Sigmoid colon (tissue), 7 donors: ENCODE measurements at regions of chr1 and their contacts with region 1.

Region 1: GRCh38 chr1:8423650-8424538 is 106.0 kb downstream of the SLC45A1 start:
- DNase-seq: peak; percentile 74
- H3K4me3 ChIP-seq: peak overlapping the region; percentile 75 to 99 (median 94)
- H3K27ac ChIP-seq: peak overlapping the region; percentile 96 to 100 (median 98)
- H3K4me1 ChIP-seq: peaks cover 0 to 57% (median 44%) of the 10 kb centered on the region in 4 donors
- H3K27me3 ChIP-seq: no peaks in the 10 kb centered on the region
- CTCF ChIP-seq: peak in 1 of 4 experiments; percentile 26
- EP300 ChIP-seq: no peak
- POLR2A ChIP-seq: peak; percentile 15 to 20

Region 2: GRCh38 chr1:8554956-8555534 is 131.2 kb after region 1 on chr1:
- intact Hi-C with region 1: no loop called
- DNase-seq: peak; percentile 42
- H3K4me3 ChIP-seq: no peak overlapping the region
- H3K27ac ChIP-seq: no peak overlapping the region
- H3K4me1 ChIP-seq: peaks cover 0 to 13% (median 3%) of the 10 kb centered on the region in 4 donors
- H3K27me3 ChIP-seq: no peaks in the 10 kb centered on the region
- CTCF ChIP-seq: no peak
- EP300 ChIP-seq: no peak
- POLR2A ChIP-seq: no peak

Region 3: DNA sequence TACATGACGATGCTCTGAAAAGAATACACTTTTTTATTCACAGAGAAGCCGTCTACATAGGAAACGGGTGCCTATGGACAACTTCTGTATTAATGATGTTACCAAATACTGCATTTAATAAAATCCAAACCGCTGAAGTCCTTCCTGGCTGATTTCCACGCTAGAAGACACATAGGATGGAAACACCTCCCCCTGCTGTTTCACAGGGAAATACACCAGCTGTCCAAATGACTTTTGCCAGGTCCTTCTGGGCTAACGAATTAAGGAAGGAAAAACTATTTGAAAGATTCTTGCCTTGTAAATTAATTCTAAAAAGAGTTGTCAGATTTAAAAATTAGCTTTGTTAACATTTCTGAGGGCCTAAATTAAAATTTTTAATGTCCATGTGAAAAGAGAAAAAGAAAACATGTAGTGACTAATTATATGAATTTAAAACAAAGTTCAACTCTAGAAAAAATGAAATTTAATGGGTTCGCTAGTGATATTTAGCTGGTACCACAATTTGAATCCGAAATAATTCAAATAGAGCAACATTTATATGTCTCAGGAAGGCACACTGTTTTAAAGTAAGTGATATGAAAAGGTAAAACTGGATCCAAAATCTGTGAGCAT is 247.5 kb after region 1 on chr1:
- intact Hi-C with region 1: no loop called
- DNase-seq: peak; percentile 81
- H3K4me3 ChIP-seq: no peak overlapping the region
- H3K27ac ChIP-seq: peak overlapping the region in 2 of 4 donors; percentile 46 to 51
- H3K4me1 ChIP-seq: peaks cover 0 to 65% (median 51%) of the 10 kb centered on the region in 4 donors
- H3K27me3 ChIP-seq: no peaks in the 10 kb centered on the region
- CTCF ChIP-seq: peak; percentile 44 to 87 (median 76)
- EP300 ChIP-seq: no peak
- POLR2A ChIP-seq: no peak

Region 4: DNA sequence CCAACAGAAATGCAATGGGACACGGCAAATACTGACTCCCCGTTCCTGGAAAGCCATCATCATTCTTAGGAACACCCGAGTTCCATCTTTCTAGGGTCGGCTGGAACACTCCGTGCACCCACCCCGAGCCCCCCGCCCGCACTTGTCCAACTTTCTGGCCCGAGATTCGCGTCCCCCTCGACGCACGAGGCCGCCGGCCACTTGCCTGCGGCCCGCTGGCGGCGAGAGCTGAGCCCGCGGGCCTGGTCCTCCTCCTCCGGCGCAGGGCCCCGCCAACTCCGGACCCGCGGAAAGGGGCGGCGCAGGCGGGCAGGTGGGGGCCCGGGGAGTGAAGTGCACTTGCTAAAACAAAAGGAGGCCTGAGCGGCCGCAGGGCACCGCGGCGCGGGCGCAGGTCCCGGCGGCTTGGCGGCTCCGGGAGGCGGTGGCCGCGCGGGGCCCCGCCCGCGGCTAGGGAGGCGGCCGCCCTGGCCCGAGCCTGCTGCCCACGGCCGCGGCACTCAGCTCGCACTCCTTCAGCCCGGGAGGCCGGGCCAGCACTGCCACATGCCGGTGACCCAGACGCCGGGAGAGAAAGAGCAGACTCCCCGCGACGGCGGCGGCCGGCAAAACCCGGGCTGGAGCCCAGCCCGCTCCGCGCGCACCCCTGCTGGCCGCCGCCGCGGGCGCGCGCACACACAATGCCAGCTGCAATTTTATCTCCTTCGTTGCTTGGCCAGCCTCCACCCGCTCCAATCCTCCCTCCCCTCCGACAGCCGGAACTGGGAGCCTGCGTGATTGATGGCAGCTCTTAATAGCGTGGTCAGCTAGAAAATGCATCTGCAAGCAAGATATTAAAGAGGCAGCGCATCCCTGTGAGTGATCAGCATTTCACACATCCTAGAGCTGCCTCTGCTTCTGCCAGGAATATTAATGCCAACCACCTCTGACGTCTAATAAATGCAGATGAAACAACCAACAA is 279.2 kb after region 1 on chr1:
- intact Hi-C with region 1: loop called (anchors 5 kb)
- DNase-seq: peak; percentile 95
- H3K4me3 ChIP-seq: peak overlapping the region; percentile 52 to 69 (median 64)
- H3K27ac ChIP-seq: peak overlapping the region; percentile 88 to 94 (median 91)
- H3K4me1 ChIP-seq: peaks cover 0 to 70% (median 46%) of the 10 kb centered on the region in 4 donors
- H3K27me3 ChIP-seq: no peaks in the 10 kb centered on the region
- CTCF ChIP-seq: no peak
- EP300 ChIP-seq: no peak
- POLR2A ChIP-seq: no peak

Region 5: GRCh38 chr1:8797216-8797615 is 373.3 kb after region 1 on chr1:
- intact Hi-C with region 1: no loop called
- DNase-seq: no peak
- H3K4me3 ChIP-seq: no peak overlapping the region
- H3K27ac ChIP-seq: no peak overlapping the region
- H3K4me1 ChIP-seq: peaks cover 0 to 7% (median 2%) of the 10 kb centered on the region in 4 donors
- H3K27me3 ChIP-seq: no peaks in the 10 kb centered on the region
- CTCF ChIP-seq: no peak
- EP300 ChIP-seq: no peak
- POLR2A ChIP-seq: no peak